PC-3 (cell line): ENCODE measurements at regions of chr14 and their contacts with region 1.

Region 1: DNA sequence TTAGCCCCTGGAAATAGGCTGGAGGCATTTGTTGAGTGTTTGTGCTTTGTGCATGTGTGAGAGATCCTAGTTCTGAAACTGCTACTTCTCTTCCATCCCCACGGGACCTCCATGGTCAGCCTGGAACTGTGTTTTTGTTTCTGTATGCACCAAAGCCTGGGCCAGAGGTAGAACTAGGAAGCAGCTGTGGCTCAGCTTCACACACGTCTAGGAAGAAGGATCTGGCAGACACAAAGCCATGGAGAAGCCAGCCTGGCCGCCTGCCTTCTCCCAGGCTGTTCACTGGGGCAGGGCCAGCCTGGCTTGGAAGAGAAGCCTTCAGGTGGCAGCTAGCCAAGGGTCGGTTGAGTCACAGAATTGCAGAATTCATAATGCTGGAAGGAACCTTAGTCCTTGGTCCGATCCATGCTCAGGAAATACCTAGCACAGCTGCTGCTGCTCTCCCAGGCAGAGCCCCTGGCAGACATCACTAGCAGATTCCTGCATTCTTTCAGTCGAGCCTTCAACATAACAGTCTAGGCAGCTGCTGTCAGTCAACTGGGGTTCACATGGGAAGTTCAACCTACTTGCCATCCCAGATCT is 27.0 kb downstream of the RIN3 start:
- DNase-seq: peak; percentile 96
- ATAC-seq: peak; percentile 91
- H3K4me3 ChIP-seq: no peak overlapping the region
- H3K27ac ChIP-seq: peak overlapping the region; percentile 74
- H3K4me1 ChIP-seq: peaks cover 20% of the 10 kb centered on the region
- H3K27me3 ChIP-seq: no peaks in the 10 kb centered on the region
- CTCF ChIP-seq: no peak

Region 2: GRCh38 chr14:92503756-92504491 is 36.6 kb before region 1 on chr14:
- CTCF ChIA-PET with region 1: no interaction called
- POLR2A ChIA-PET with region 1: no interaction called
- intact Hi-C with region 1: loop called (anchors 5 kb)
- DNase-seq: peak; percentile 95
- ATAC-seq: peak; percentile 93
- H3K4me3 ChIP-seq: no peak overlapping the region
- H3K27ac ChIP-seq: peak overlapping the region; percentile 69
- H3K4me1 ChIP-seq: peaks cover 61% of the 10 kb centered on the region
- H3K27me3 ChIP-seq: no peaks in the 10 kb centered on the region
- CTCF ChIP-seq: no peak